PC-3 (cell line): ENCODE measurements at regions of chr12 and their contacts with region 1.

Region 1: GRCh38 chr12:88650715-88651114 is 70.4 kb upstream of the KITLG start:
- DNase-seq: peak; percentile 82
- ATAC-seq: peak; percentile 51
- H3K4me3 ChIP-seq: no peak overlapping the region
- H3K27ac ChIP-seq: peak overlapping the region; percentile 4
- H3K4me1 ChIP-seq: peaks cover 24% of the 10 kb centered on the region
- H3K27me3 ChIP-seq: no peaks in the 10 kb centered on the region
- CTCF ChIP-seq: no peak

Region 2: DNA sequence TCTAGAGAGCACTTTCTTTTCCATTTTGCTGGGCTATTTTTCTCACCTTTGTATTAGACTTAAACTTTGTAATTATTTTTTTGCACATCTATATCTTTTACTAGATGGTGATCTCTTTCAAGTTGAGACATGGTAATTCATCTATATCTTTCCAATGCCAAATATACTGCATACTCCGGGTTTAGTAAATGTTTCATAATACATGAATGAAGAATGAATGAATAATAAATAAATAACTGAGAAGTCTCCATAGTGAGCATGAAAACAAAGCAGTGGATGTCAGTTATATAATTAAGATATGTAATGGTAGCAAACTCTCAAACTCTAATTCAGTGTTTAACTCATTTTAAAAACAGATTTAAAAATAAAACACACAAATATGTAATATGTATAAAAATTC is 272.1 kb after region 1 on chr12:
- CTCF ChIA-PET with region 1: no interaction called
- POLR2A ChIA-PET with region 1: no interaction called
- intact Hi-C with region 1: loop called (anchors 10 kb)
- DNase-seq: no peak
- ATAC-seq: no peak
- H3K4me3 ChIP-seq: no peak overlapping the region
- H3K27ac ChIP-seq: no peak overlapping the region
- H3K4me1 ChIP-seq: peaks cover 45% of the 10 kb centered on the region
- H3K27me3 ChIP-seq: no peaks in the 10 kb centered on the region
- CTCF ChIP-seq: no peak